H1 (cell line): ENCODE measurements at regions of chr19 and their contacts with region 1.

Region 1: DNA sequence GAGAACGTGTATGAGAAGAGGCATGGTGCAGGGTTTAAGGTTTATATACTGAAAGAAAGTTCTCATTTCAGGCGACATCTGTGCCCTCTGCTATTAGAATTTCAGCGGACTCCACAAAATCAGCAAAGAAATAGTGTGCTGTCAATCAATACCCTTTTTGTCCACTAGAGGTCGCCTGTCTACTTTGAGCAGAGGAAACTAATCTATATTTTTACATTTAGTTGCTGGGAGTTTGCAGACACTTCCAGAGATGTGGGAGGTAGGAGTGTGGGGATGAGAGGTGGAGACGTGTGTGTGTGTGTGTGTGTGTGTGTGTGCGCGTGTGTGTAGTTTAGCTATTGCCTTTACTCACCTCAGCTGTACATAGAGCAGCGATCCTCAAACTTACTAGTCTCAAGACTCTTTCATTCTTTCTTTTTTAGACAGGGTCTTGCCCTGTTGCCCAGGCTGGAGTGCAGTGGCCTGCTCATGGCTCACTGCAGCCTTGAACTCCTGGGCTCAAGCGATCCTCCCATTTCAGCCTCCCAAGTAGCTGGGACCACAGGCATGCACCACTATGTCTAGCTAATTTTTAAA is 9.7 kb downstream of the INAFM1 start:
- DNase-seq: peak in 1 of 2 experiments; percentile 60
- H3K4me3 ChIP-seq: no peak overlapping the region
- H3K27ac ChIP-seq: no peak overlapping the region
- H3K4me1 ChIP-seq: no peaks in the 10 kb centered on the region; a peak in 2 of 7 replicates
- H3K27me3 ChIP-seq: no peaks in the 10 kb centered on the region; a peak in 1 of 7 replicates
- CTCF ChIP-seq: peak in 2 of 3 experiments; percentile 64 to 74; a peak in 3 of 4 replicates
- EP300 ChIP-seq: no peak
- POLR2A ChIP-seq: no peak
- RAD21 ChIP-seq: peak; percentile 58 to 65

Region 2: GRCh38 chr19:47256688-47257443 is 27.5 kb before region 1 on chr19:
- CTCF ChIA-PET with region 1: no interaction called
- POLR2A ChIA-PET with region 1: no interaction called
- DNase-seq: peak; percentile 98 to 100
- H3K4me3 ChIP-seq: peak overlapping the region in 2 of 4 experiments; percentile 78 to 92
- H3K27ac ChIP-seq: no peak overlapping the region
- H3K4me1 ChIP-seq: peaks cover 0 to 8% (median 6%) of the 10 kb centered on the region in 4 experiments; a peak in 6 of 7 replicates
- H3K27me3 ChIP-seq: no peaks in the 10 kb centered on the region
- CTCF ChIP-seq: no peak
- EP300 ChIP-seq: no peak
- POLR2A ChIP-seq: no peak
- RAD21 ChIP-seq: no peak

Region 3: GRCh38 chr19:47273313-47273977 is 11.0 kb before region 1 on chr19:
- CTCF ChIA-PET with region 1: interaction called, 17 read pairs
- POLR2A ChIA-PET with region 1: interaction called, 7 read pairs
- DNase-seq: peak; percentile 79 to 92
- H3K4me3 ChIP-seq: peak overlapping the region; percentile 70 to 84 (median 78)
- H3K27ac ChIP-seq: peak overlapping the region; percentile 92
- H3K4me1 ChIP-seq: peaks cover 0 to 19% (median 8%) of the 10 kb centered on the region in 4 experiments; a peak in 6 of 7 replicates
- H3K27me3 ChIP-seq: peaks cover 0 to 10% (median 6%) of the 10 kb centered on the region in 4 experiments; a peak in 5 of 7 replicates
- CTCF ChIP-seq: no peak
- EP300 ChIP-seq: no peak
- POLR2A ChIP-seq: peak; percentile 71 to 78; a peak in 2 of 3 replicates
- RAD21 ChIP-seq: no peak